ENCODE measurements at regions of chr1 and their contacts with region 1.

Region 1: GRCh38 chr1:23772049-23772853 is 6.0 kb upstream of the PITHD1 start:
- DNase-seq: peak; percentile 92
- ATAC-seq: peak; percentile 97
- H3K4me3 Mint-ChIP-seq: no peak overlapping the region
- H3K27ac Mint-ChIP-seq: no peak overlapping the region
- H3K4me1 Mint-ChIP-seq: peaks cover 32% of the 10 kb centered on the region
- H3K27me3 Mint-ChIP-seq: no peaks in the 10 kb centered on the region

Region 2: GRCh38 chr1:23489842-23490241 is 282.4 kb before region 1 on chr1:
- CTCF ChIA-PET with region 1: no interaction called
- POLR2A ChIA-PET with region 1: no interaction called
- DNase-seq: no peak
- ATAC-seq: no peak
- H3K4me3 Mint-ChIP-seq: no peak overlapping the region
- H3K27ac Mint-ChIP-seq: no peak overlapping the region
- H3K4me1 Mint-ChIP-seq: peaks cover 4% of the 10 kb centered on the region
- H3K27me3 Mint-ChIP-seq: peaks cover 40% of the 10 kb centered on the region

Region 3: GRCh38 chr1:23691499-23692307 is 80.5 kb before region 1 on chr1 and contains the start of gene RPL11:
- CTCF ChIA-PET with region 1: interaction called, 12 read pairs
- POLR2A ChIA-PET with region 1: interaction called, 3 read pairs
- DNase-seq: peak; percentile 91
- ATAC-seq: peak; percentile 96
- H3K4me3 Mint-ChIP-seq: peak within 1 kb of the TSS; percentile 98
- H3K27ac Mint-ChIP-seq: peak within 1 kb of the TSS; percentile 94
- H3K4me1 Mint-ChIP-seq: peaks cover 47% of the 10 kb centered on the region
- H3K27me3 Mint-ChIP-seq: peaks cover 2% of the 10 kb centered on the region
- total RNA-seq, gene RPL11: 1,096 to 1,128 TPM

Region 4: DNA sequence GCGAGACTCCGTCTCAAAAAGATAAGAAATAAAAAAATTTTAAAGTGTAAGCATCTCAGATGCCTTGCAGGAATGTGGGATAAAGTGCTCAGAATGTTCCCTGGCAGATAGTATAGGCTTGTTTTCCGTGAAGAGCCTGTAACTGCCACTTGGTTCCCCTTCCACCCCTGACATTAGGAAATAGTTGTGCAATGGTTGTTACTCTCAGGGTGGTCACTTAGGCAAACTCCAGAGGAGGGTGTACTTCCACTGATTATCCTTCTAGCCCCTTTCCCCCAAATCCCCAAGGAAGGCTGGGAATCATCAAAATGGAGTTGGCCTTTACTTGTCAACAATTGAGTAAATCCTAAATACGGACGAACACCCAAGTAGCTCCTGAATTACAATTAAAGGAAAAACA is 70.3 kb before region 1 on chr1:
- CTCF ChIA-PET with region 1: no interaction called
- POLR2A ChIA-PET with region 1: no interaction called
- DNase-seq: no peak
- ATAC-seq: no peak
- H3K4me3 Mint-ChIP-seq: no peak overlapping the region
- H3K27ac Mint-ChIP-seq: no peak overlapping the region
- H3K4me1 Mint-ChIP-seq: peaks cover 23% of the 10 kb centered on the region
- H3K27me3 Mint-ChIP-seq: no peaks in the 10 kb centered on the region

Region 5: DNA sequence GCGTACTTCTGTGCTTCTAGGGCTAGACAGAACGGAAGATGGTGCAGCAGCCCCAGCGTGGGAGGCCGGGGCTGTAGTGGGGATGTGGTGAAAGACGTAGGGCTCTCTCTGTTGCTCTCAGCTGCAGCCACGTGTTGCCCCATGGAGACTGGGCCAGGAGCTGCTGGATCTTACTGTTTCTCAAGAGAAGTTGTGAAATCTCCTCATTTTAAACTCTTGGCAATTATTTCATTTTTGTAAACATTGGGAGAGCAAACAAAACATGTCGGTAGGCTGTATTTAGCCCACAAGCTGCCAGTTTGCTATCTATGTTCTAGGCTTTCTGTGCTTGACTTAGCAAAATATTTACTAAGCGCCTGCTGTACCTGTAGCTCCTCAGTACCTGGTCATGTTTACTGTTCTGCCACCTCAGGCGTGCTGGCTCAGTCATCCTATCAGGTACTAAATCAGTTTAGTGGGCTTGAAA is 44.9 kb before region 1 on chr1:
- CTCF ChIA-PET with region 1: no interaction called
- POLR2A ChIA-PET with region 1: no interaction called
- DNase-seq: no peak
- ATAC-seq: no peak
- H3K4me3 Mint-ChIP-seq: no peak overlapping the region
- H3K27ac Mint-ChIP-seq: no peak overlapping the region
- H3K4me1 Mint-ChIP-seq: no peaks in the 10 kb centered on the region
- H3K27me3 Mint-ChIP-seq: no peaks in the 10 kb centered on the region

Region 6: DNA sequence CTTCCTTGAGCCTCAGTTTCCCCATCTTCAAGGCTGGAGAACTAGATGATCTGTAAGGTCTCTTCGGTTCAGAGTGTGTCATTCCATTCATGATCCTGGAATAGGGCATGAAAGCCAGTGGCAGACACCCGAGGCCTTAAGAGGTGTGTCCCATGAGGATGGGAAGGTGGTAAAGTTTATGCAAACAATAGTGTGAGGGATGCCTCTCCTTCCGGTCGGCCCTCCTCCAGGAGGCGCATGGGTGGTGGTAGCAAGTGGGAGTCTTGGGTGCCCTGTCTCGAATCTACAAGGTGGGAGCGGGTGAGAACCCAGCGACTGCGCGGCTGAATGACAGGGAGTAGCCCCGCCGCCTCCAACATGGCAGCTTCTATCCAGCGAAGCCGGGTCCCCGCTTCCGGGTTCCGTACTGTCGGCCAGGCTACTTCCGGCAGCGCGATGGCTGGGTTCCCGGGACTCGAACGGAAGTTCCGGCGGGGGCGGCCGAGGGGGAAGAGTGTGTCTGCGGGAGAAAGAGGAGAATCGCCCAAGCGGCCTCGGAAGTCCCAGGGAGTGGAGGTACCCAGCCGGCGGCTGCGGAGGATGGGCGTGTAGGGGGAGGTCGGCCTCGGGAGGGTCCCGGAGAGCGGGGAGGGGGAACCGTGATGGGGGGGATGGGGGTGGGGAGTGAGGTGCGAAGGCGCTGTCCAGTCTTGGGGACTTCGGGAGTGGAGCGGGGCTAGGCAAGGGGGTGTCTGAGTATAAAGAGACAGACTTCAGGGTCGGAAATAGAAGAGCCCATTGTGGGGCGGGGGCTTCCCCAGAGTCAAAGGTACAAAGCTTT is 18.7 kb after region 1 on chr1 and contains the start of gene LYPLA2:
- CTCF ChIA-PET with region 1: interaction called, 13 read pairs
- POLR2A ChIA-PET with region 1: interaction called, 4 read pairs
- DNase-seq: peak; percentile 92
- ATAC-seq: peak; percentile 90
- H3K4me3 Mint-ChIP-seq: peak within 1 kb of the TSS; percentile 95
- H3K27ac Mint-ChIP-seq: peak within 1 kb of the TSS; percentile 97
- H3K4me1 Mint-ChIP-seq: peaks cover 36% of the 10 kb centered on the region
- H3K27me3 Mint-ChIP-seq: no peaks in the 10 kb centered on the region
- total RNA-seq, gene LYPLA2: 84.2 to 88.2 TPM

Region 7: DNA sequence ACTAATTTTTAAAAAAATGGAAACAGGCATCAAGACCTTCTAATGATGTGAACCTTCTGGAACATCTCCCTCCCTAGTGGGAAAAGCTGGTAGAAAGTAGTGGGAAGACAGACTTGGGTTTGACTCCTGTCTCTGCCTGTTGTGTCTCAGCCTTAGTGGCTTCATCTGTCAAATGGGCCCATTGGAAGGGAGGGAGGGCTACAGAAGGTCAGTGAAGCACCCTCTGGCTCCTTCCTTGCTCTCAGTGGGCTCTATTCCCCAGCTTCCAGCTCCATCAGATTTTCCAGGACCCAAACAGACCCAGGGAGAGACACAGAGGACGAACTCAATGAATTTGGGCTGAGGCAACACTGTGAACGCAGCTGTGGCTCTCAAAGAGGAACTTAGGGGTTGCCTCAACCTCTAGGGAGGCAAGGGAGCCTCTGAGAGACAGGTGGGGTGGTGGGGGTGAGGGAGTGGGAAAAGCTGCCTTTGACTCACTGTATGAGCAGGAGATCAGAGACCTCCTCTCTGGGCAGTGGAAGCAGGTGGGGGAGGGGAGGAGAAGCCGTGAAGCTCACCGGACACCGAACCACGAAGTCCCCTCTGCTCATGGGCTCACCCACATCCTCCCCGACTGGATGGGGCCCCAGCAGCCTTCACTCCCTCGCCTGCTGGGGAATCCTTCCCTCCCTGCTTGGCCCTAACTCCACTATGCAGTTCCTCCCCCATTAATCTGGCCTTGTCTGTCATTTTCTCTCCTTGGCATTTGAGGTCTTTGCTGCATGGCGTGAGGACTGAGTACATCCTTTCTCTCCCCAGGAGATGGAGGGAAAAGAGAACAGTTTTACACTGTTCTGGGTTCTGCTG is 136.5 kb after region 1 on chr1:
- CTCF ChIA-PET with region 1: interaction called, 12 read pairs
- POLR2A ChIA-PET with region 1: interaction called, 3 read pairs
- DNase-seq: peak; percentile 77
- ATAC-seq: peak; percentile 64
- H3K4me3 Mint-ChIP-seq: peak overlapping the region; percentile 57
- H3K27ac Mint-ChIP-seq: peak overlapping the region; percentile 90
- H3K4me1 Mint-ChIP-seq: peaks cover 86% of the 10 kb centered on the region
- H3K27me3 Mint-ChIP-seq: peaks cover 2% of the 10 kb centered on the region

Region 8: DNA sequence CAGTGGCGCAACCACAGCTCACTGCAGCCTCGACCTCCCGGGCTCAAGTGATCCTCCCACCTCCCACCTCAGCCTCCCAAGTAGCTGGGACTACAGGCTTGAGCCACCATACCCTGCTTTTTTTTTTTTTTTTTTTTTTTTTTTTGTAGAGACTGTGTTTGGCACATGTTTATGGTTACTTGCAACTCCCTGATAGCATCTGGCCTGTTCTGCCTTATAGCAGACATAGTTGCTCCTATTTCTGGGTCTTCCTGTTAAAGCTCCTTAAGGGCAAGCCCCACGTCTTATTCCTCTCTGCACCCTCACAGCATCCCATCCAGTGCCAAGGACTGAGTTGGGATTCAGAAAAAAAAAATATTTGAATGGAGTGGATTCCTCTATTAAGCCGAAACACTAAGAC is 158.0 kb after region 1 on chr1:
- CTCF ChIA-PET with region 1: interaction called, 10 read pairs
- POLR2A ChIA-PET with region 1: no interaction called
- DNase-seq: no peak
- ATAC-seq: no peak
- H3K4me3 Mint-ChIP-seq: no peak overlapping the region
- H3K27ac Mint-ChIP-seq: no peak overlapping the region
- H3K4me1 Mint-ChIP-seq: no peaks in the 10 kb centered on the region
- H3K27me3 Mint-ChIP-seq: peaks cover 7% of the 10 kb centered on the region

Region 9: DNA sequence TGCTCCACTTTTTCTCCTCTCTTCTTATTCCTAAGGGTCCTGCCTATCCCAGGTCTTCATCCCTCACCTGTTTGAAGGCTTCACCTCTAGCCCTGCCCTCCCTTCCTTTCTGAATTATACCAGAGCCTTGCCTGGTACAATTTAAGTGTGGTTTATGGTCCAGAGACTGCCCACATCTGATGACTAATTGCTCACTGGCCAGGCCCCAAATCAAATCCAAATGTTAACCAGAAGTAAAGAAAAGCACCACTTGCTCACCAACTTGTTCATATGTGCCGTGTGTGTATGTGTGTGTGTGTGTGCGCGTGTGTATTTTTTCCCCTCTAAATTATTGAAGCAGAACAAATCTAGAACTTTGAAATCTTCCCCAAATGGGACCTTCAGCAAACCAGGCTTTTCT is 313.3 kb after region 1 on chr1:
- CTCF ChIA-PET with region 1: no interaction called
- POLR2A ChIA-PET with region 1: no interaction called
- DNase-seq: no peak
- ATAC-seq: no peak
- H3K4me3 Mint-ChIP-seq: no peak overlapping the region
- H3K27ac Mint-ChIP-seq: no peak overlapping the region
- H3K4me1 Mint-ChIP-seq: no peaks in the 10 kb centered on the region
- H3K27me3 Mint-ChIP-seq: peaks cover 6% of the 10 kb centered on the region